Mammary epithelial cell (primary cell): ENCODE measurements at regions of chr15 and their contacts with region 1.

Region 1: DNA sequence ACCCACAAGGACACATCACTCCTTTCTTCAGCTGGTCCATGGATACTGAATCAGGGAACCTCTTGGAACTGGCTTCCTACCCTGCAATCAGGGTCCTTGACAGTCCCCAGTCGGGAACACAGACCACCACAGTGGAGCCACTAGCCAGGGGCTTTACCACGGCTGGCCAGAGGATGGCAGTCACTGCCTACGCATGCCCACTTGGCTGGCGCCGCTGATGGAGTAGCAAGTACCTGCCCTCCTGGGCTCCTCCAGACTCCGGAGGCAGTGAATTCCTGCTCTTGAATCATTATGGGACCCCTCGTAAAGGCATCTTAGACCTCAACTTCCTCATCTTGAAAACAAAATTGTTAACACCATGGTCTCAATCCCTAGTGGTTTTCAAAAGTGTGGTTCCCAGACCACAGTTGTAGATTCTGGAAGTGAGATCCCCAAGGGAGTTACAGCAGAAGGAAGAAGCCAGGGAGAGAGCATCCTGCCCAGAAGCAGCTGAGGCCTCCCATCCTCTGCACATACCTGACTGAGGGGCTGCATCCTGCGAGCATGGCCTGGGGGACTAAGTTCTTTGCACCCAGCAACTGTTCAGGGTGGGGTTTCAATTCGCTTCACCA is 9.1 kb upstream of the SKIC8 start:
- DNase-seq: peak; percentile 41
- H3K4me3 ChIP-seq: no peak overlapping the region
- H3K27ac ChIP-seq: no peak overlapping the region
- H3K4me1 ChIP-seq: no peaks in the 10 kb centered on the region
- H3K27me3 ChIP-seq: no peaks in the 10 kb centered on the region
- CTCF ChIP-seq: peak; percentile 88 to 97

Region 2: DNA sequence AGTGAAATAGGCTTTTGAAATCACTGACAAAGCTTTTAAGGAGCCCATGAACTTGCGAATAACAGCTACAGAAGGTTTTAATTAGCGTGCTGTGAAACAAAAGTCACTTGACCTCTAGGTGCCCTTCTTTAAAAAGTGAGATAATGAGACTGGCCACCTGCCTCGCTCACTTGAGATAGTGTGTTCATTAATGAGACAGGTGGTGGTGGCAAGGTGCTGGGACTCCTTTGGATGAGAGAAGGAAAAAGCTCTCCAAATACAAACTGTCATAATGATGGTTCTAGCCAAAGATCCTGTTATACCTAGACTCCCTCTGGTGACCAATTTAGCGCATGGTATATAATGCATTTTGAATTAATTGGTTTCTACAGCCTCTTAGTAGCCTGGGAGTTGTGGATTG is 106.8 kb after region 1 on chr15:
- CTCF ChIA-PET with region 1: no interaction called
- dilution Hi-C with region 1: no loop called
- in situ Hi-C with region 1: loop called in 1 of 2 experiments (anchors 5 kb)
- intact Hi-C with region 1: loop called (anchors 1 kb)
- DNase-seq: peak; percentile 22
- H3K4me3 ChIP-seq: no peak overlapping the region
- H3K27ac ChIP-seq: no peak overlapping the region
- H3K4me1 ChIP-seq: no peaks in the 10 kb centered on the region
- H3K27me3 ChIP-seq: no peaks in the 10 kb centered on the region
- CTCF ChIP-seq: peak; percentile 16 to 42

Region 3: GRCh38 chr15:78422571-78423340 is 114.2 kb after region 1 on chr15:
- CTCF ChIA-PET with region 1: no interaction called
- dilution Hi-C with region 1: no loop called
- in situ Hi-C with region 1: loop called (anchors 5 kb)
- intact Hi-C with region 1: loop called (anchors 1 kb)
- DNase-seq: peak; percentile 29
- H3K4me3 ChIP-seq: no peak overlapping the region
- H3K27ac ChIP-seq: no peak overlapping the region
- H3K4me1 ChIP-seq: no peaks in the 10 kb centered on the region
- H3K27me3 ChIP-seq: no peaks in the 10 kb centered on the region
- CTCF ChIP-seq: peak; percentile 92 to 95

Region 4: DNA sequence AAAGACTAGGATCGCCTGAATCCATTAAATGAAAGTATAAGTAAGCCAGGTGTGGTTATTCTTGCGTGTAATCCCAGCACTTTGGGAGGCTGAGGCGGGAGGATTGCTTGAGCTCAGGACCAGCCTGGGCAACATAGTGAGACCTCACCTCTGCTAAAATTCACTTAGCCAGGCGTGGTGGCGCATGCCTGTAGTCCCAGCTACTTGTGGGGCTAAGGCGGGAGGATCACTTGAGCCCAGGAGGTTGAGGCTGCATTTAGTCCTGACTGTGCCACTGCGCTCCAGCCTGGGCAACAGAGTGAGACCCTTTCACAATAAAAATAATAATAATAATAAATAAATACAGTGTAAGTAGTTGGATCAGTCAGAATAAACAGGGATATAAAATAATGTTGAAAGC is 173.4 kb after region 1 on chr15:
- CTCF ChIA-PET with region 1: no interaction called
- dilution Hi-C with region 1: no loop called
- in situ Hi-C with region 1: no loop called
- intact Hi-C with region 1: loop called (anchors 1 kb)
- DNase-seq: no peak
- H3K4me3 ChIP-seq: no peak overlapping the region
- H3K27ac ChIP-seq: no peak overlapping the region
- H3K4me1 ChIP-seq: no peaks in the 10 kb centered on the region
- H3K27me3 ChIP-seq: no peaks in the 10 kb centered on the region
- CTCF ChIP-seq: no peak

Region 5: GRCh38 chr15:78618490-78618934 is 310.0 kb after region 1 on chr15:
- CTCF ChIA-PET with region 1: no interaction called
- dilution Hi-C with region 1: no loop called
- in situ Hi-C with region 1: no loop called
- intact Hi-C with region 1: loop called (anchors 5 kb)
- DNase-seq: peak; percentile 57
- H3K4me3 ChIP-seq: no peak overlapping the region
- H3K27ac ChIP-seq: no peak overlapping the region
- H3K4me1 ChIP-seq: peaks cover 23% of the 10 kb centered on the region
- H3K27me3 ChIP-seq: peaks cover 21% of the 10 kb centered on the region
- CTCF ChIP-seq: peak; percentile 66 to 76

Region 6: GRCh38 chr15:78681281-78682003 is 372.9 kb after region 1 on chr15:
- CTCF ChIA-PET with region 1: no interaction called
- dilution Hi-C with region 1: no loop called
- in situ Hi-C with region 1: no loop called
- intact Hi-C with region 1: no loop called
- DNase-seq: no peak
- H3K4me3 ChIP-seq: no peak overlapping the region
- H3K27ac ChIP-seq: no peak overlapping the region
- H3K4me1 ChIP-seq: peaks cover 10% of the 10 kb centered on the region
- H3K27me3 ChIP-seq: no peaks in the 10 kb centered on the region
- CTCF ChIP-seq: no peak

Region 7: GRCh38 chr15:78709263-78709882 is 400.8 kb after region 1 on chr15:
- CTCF ChIA-PET with region 1: no interaction called
- dilution Hi-C with region 1: no loop called
- in situ Hi-C with region 1: loop called in 1 of 2 experiments (anchors 25 kb)
- intact Hi-C with region 1: loop called (anchors 1 kb)
- DNase-seq: peak; percentile 33
- H3K4me3 ChIP-seq: peak overlapping the region in 2 of 3 experiments; percentile 2 to 12
- H3K27ac ChIP-seq: no peak overlapping the region
- H3K4me1 ChIP-seq: no peaks in the 10 kb centered on the region
- H3K27me3 ChIP-seq: peaks cover 2% of the 10 kb centered on the region
- CTCF ChIP-seq: peak; percentile 50 to 92

Region 8: DNA sequence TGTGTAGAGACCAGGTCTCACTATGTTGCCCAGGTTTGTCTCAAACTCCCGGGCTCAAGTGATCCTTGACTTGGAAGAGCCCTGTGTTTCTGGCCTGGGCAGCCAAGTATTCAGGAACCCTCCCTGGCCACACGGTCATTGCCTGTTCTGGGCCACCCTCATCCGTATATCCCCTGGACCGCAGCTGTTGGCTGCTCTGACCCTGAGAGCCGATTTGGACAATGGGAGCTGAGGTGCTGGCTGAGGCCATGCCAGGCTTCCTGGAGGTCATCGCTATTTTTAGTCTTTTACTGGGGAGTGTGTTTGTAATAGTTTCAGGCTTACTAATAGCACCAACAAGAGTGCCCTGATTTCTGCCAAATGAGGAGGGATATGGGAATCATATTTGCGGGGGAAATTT is 442.0 kb after region 1 on chr15:
- CTCF ChIA-PET with region 1: no interaction called
- dilution Hi-C with region 1: no loop called
- in situ Hi-C with region 1: no loop called
- intact Hi-C with region 1: loop called (anchors 5 kb)
- DNase-seq: no peak
- H3K4me3 ChIP-seq: no peak overlapping the region
- H3K27ac ChIP-seq: no peak overlapping the region
- H3K4me1 ChIP-seq: no peaks in the 10 kb centered on the region
- H3K27me3 ChIP-seq: no peaks in the 10 kb centered on the region
- CTCF ChIP-seq: no peak